Kidney (tissue), 22 donors: ENCODE measurements at regions of chr22 and their contacts with region 1.

Region 1: DNA sequence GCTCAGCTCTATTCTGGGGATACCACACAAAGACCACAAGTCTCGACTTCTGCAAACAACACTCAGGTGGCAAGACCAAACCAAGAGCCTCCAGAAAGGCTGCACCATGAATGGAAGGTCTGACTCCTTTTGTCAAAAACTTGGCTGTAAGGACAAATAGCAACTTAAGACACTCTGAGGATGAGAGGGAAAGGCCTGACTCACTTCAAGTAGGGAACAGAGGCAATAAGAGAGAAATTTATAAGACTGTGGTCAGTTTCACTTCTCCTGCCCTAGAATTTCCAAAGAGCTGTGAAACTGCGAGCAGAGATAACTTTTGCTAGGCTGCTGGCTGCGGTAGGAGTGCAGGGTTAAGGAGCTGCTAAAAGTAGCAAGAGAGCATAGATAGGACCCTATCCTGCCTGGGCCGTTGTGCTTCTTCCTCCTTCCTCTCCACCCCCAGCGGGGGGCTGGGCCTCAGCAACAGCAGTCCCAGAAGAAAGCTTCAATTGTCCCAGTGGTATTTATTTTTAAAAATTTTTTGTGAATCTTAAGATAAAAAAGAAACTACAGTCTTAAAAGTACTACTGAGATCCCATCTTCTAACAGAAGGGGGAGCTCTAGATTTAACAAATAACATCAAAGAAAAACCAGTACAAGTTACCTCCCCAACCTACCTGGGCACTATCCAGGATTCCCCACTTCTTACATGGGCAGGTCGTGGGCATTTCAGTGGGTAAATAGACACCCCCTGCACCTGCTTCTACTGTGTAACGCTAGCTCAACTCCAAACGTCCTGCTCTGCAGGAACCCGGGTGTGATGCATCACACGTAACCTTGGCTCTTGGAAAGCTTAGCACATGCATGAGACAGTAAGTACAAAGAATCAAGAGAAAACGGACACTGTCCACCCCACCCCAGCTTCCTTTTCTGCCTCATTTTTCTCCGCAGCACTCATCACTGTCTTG is 66.4 kb downstream of the SGSM3 start:
- DNase-seq: peak in 2 of 5 donors; percentile 71 to 78
- H3K4me3 ChIP-seq: no peak overlapping the region
- H3K27ac ChIP-seq: no peak overlapping the region
- H3K4me1 ChIP-seq: peaks cover 0 to 4% (median 0%) of the 10 kb centered on the region in 3 donors
- H3K27me3 ChIP-seq: no peaks in the 10 kb centered on the region
- CTCF ChIP-seq: peak; percentile 55

Region 2: GRCh38 chr22:40479126-40479800 is 42.5 kb after region 1 on chr22:
- intact Hi-C with region 1: no loop called
- DNase-seq: no peak
- H3K4me3 ChIP-seq: no peak overlapping the region
- H3K27ac ChIP-seq: no peak overlapping the region
- H3K4me1 ChIP-seq: peaks cover 0 to 6% (median 0%) of the 10 kb centered on the region in 3 donors
- H3K27me3 ChIP-seq: no peaks in the 10 kb centered on the region
- CTCF ChIP-seq: no peak

Region 3: GRCh38 chr22:40628354-40629042 is 191.7 kb after region 1 on chr22:
- intact Hi-C with region 1: no loop called
- DNase-seq: peak in 1 of 5 donors; percentile 32
- H3K4me3 ChIP-seq: no peak overlapping the region
- H3K27ac ChIP-seq: no peak overlapping the region
- H3K4me1 ChIP-seq: peaks cover 0 to 6% (median 0%) of the 10 kb centered on the region in 3 donors
- H3K27me3 ChIP-seq: no peaks in the 10 kb centered on the region
- CTCF ChIP-seq: no peak

Region 4: GRCh38 chr22:40645579-40646197 is 208.9 kb after region 1 on chr22:
- intact Hi-C with region 1: loop called (anchors 5 kb)
- DNase-seq: peak in 1 of 5 donors; percentile 20
- H3K4me3 ChIP-seq: no peak overlapping the region
- H3K27ac ChIP-seq: no peak overlapping the region
- H3K4me1 ChIP-seq: peaks cover 0 to 4% (median 0%) of the 10 kb centered on the region in 3 donors
- H3K27me3 ChIP-seq: no peaks in the 10 kb centered on the region
- CTCF ChIP-seq: no peak